ENCODE measurements at regions of chr2 and their contacts with region 1.

Region 1: GRCh38 chr2:84946204-84947009 is 24.6 kb upstream of the KCMF1 start:
- DNase-seq: peak; percentile 69
- H3K4me3 Mint-ChIP-seq: peak overlapping the region; percentile 31
- H3K27ac Mint-ChIP-seq: peak overlapping the region; percentile 89
- H3K4me1 Mint-ChIP-seq: peaks cover 42% of the 10 kb centered on the region
- H3K27me3 Mint-ChIP-seq: no peaks in the 10 kb centered on the region

Region 2: GRCh38 chr2:84735389-84735788 is 211.0 kb before region 1 on chr2:
- CTCF ChIA-PET with region 1: no interaction called
- POLR2A ChIA-PET with region 1: no interaction called
- DNase-seq: no peak
- H3K4me3 Mint-ChIP-seq: no peak overlapping the region
- H3K27ac Mint-ChIP-seq: no peak overlapping the region
- H3K4me1 Mint-ChIP-seq: peaks cover 7% of the 10 kb centered on the region
- H3K27me3 Mint-ChIP-seq: peaks cover 4% of the 10 kb centered on the region

Region 3: GRCh38 chr2:84931384-84931821 is 15.0 kb before region 1 on chr2:
- CTCF ChIA-PET with region 1: interaction called, 50 read pairs
- POLR2A ChIA-PET with region 1: interaction called, 90 read pairs
- DNase-seq: no peak
- H3K4me3 Mint-ChIP-seq: no peak overlapping the region
- H3K27ac Mint-ChIP-seq: no peak overlapping the region
- H3K4me1 Mint-ChIP-seq: peaks cover 37% of the 10 kb centered on the region
- H3K27me3 Mint-ChIP-seq: no peaks in the 10 kb centered on the region

Region 4: GRCh38 chr2:84958135-84959044 is 12.0 kb after region 1 on chr2:
- CTCF ChIA-PET with region 1: no interaction called
- POLR2A ChIA-PET with region 1: interaction called, 34 read pairs
- DNase-seq: no peak
- H3K4me3 Mint-ChIP-seq: no peak overlapping the region
- H3K27ac Mint-ChIP-seq: no peak overlapping the region
- H3K4me1 Mint-ChIP-seq: peaks cover 18% of the 10 kb centered on the region
- H3K27me3 Mint-ChIP-seq: no peaks in the 10 kb centered on the region

Region 5: GRCh38 chr2:84963692-84964405 is 17.4 kb after region 1 on chr2:
- CTCF ChIA-PET with region 1: interaction called, 12 read pairs
- POLR2A ChIA-PET with region 1: interaction called, 351 read pairs
- DNase-seq: no peak
- H3K4me3 Mint-ChIP-seq: no peak overlapping the region
- H3K27ac Mint-ChIP-seq: no peak overlapping the region
- H3K4me1 Mint-ChIP-seq: peaks cover 44% of the 10 kb centered on the region
- H3K27me3 Mint-ChIP-seq: no peaks in the 10 kb centered on the region

Region 6: GRCh38 chr2:84970868-84971509 is 24.6 kb after region 1 on chr2 and contains the start of gene KCMF1:
- CTCF ChIA-PET with region 1: interaction called, 12 read pairs
- POLR2A ChIA-PET with region 1: interaction called, 351 read pairs
- DNase-seq: peak; percentile 76
- H3K4me3 Mint-ChIP-seq: peak within 1 kb of the TSS; percentile 96
- H3K27ac Mint-ChIP-seq: peak within 1 kb of the TSS; percentile 100
- H3K4me1 Mint-ChIP-seq: peaks cover 47% of the 10 kb centered on the region
- H3K27me3 Mint-ChIP-seq: no peaks in the 10 kb centered on the region
- total RNA-seq, gene KCMF1: 87.0 to 92.9 TPM

Region 7: GRCh38 chr2:85015653-85016360 is 69.4 kb after region 1 on chr2:
- CTCF ChIA-PET with region 1: interaction called, 12 read pairs
- POLR2A ChIA-PET with region 1: no interaction called
- DNase-seq: no peak
- H3K4me3 Mint-ChIP-seq: no peak overlapping the region
- H3K27ac Mint-ChIP-seq: no peak overlapping the region
- H3K4me1 Mint-ChIP-seq: peaks cover 56% of the 10 kb centered on the region
- H3K27me3 Mint-ChIP-seq: no peaks in the 10 kb centered on the region

Measured in activated CD4-positive, alpha-beta memory T cell treated with anti-CD3 and anti-CD28 coated beads, Interleukin-2, amount 10 ng/mL, durations not matched to agents 7 days and 5 days (primary cell).